ENCODE measurements at regions of chr13 and their contacts with region 1.

Region 1: DNA sequence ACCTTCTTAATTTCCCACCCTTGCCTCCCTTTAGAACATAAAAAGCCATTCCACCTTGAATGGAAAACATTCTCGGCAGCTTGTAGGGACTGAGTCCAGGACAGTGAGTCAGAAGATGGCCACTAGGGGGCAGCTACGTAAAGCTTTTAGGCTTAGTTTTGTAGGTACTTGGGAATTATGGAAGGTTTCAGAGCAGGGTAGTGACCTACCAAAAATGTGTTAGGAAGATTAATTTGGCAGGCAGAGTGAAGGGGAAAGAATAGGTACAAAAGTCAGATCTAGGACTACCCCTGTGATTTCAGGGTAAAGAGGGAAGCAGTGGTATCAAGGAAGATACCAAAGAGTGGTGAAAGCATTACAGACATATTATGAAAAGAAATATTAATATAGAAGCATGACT is 198.4 kb downstream of the NDFIP2 start:
- DNase-seq: peak; percentile 48
- ATAC-seq: peak; percentile 71

Region 2: GRCh38 chr13:79631051-79631659 is 48.2 kb before region 1 on chr13:
- intact Hi-C with region 1: loop called (anchors 2 kb)
- DNase-seq: no peak
- ATAC-seq: peak; percentile 71

Region 3: DNA sequence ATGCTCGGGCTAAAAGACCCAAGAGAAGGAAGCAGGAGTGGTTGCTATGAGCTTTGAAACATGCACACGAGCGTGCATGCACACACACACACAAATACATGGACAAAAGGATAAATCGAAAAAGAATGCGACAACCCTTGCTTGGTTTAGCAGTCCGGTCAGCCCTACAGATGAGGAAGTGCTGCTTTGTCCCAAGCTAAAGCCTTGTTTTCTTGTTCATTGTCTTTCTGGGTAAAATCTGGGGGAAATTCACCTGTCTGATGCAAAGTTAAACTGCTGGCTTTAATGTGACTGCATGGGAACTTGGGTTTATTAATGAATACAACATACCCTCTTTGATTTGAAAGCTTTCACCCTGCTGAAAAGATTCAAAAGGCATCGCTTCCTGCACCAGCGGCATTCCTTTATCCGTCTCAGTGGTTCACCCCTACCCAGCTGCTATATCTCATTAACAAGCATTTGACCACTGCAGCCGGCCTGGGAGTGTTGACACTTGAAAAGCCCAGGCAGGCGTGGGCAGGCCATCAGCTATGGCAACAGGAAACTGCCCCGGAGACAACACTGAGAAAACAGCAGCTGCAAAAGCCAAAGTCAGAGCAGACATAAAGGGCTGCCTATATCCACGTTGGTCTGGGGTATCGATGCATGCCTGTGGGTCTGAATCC is 103.3 kb after region 1 on chr13:
- intact Hi-C with region 1: loop called (anchors 5 kb)
- DNase-seq: peak; percentile 82
- ATAC-seq: peak; percentile 95

Region 4: GRCh38 chr13:80029170-80029569 is 349.8 kb after region 1 on chr13:
- intact Hi-C with region 1: loop called (anchors 10 kb)
- DNase-seq: peak; percentile 58
- ATAC-seq: no peak